ENCODE measurements at regions of chr5 and their contacts with region 1.

Region 1: DNA sequence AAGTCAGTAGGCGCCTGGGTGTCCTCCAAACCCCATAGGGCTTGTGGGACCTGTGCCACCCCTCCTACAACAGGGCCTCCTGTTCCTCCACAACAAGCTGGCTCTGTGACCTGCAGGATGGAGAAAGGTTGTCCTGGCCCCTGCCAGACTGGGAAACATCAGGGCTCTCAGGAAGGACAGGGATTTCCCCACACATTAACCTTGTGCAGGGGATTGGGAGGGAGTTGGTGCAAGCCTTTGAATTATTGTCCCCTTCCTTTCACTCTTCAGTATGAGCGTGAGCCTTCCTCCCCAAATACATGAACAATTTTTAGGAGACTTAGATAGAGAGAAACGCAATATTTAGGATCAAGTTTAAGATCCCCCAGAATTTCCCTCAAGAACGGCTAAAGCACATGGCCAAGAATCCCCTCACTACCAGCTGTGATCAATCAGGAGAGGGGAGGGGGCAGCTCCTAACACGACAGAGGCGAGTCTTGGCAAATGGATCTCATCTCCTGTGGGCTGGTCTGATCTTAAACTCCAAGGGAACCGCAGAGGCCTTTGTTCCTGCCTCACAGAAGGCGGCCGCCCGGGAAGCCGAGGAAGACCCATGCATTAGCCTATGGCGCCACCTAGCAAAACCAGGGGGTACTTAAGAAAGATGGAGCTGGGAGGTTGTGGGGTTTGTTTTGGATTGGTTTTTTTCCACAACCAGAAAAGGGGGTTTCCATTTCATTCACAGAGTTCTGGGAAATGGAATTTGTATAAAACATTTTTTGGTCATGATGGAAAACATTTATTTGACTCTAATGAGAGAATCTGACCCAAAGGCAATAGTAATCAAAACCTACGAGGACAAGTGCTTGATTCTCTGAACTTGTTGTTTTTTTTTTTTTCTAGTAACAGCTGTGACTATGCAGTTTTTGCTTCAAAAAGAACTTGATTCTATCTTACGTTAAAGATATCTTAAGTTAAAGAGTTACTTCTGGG is 36.1 kb upstream of the OSMR start:
- DNase-seq: peak; percentile 68
- H3K4me3 ChIP-seq: no peak overlapping the region
- H3K27ac ChIP-seq: peak overlapping the region in 3 of 4 donors; percentile 24 to 60 (median 41)
- H3K4me1 ChIP-seq: peaks cover 0 to 13% (median 0%) of the 10 kb centered on the region in 4 donors
- H3K27me3 ChIP-seq: no peaks in the 10 kb centered on the region
- CTCF ChIP-seq: peak; percentile 71 to 79 (median 76)
- EP300 ChIP-seq: no peak
- POLR2A ChIP-seq: no peak

Region 2: GRCh38 chr5:38433160-38433861 is 376.4 kb before region 1 on chr5:
- in situ Hi-C with region 1: loop called (anchors 10 to 25 kb)
- intact Hi-C with region 1: no loop called
- DNase-seq: no peak
- H3K4me3 ChIP-seq: no peak overlapping the region
- H3K27ac ChIP-seq: peak overlapping the region; percentile 24 to 56 (median 42)
- H3K4me1 ChIP-seq: peaks cover 0 to 12% (median 9%) of the 10 kb centered on the region in 4 donors
- H3K27me3 ChIP-seq: no peaks in the 10 kb centered on the region
- CTCF ChIP-seq: no peak
- EP300 ChIP-seq: no peak
- POLR2A ChIP-seq: no peak

Region 3: DNA sequence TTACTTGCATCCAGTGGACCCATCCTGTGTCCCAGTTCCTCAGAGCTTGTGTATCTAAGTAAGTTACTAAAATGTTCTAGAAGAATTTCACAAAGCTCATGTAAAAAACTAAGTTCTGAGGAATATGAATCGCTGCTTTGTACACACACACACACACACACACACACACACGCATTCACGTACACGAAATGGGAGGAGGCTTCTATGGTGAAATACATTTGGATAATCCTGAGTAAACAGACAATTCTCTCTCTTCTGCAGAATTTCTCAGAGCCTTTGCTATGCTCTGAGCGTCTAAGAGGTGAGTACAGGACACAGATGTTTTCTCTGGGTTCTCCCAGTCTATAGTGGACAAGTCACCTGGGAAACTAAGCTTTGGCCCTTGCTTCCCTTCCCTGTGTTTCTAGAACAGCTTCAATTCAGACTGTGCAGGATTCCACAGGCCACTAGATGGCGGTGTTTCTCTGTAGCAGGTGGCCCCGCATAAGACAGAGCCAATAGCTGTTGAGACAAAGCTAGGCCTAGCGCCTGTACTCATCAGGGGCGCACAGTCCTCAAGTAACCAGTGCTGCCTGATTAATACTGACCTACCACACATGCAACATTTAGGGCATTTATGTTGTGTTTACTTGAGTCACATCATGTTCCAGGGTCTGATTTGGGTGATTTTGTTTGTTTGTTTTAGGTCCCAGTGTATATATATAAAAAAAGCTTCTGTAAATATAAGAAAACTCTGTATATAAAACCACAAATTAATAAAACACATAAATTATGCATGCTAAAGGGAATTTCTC is 368.0 kb before region 1 on chr5:
- in situ Hi-C with region 1: loop called (anchors 10 to 25 kb)
- intact Hi-C with region 1: loop called (anchors 10 kb)
- DNase-seq: peak; percentile 85
- H3K4me3 ChIP-seq: no peak overlapping the region
- H3K27ac ChIP-seq: no peak overlapping the region
- H3K4me1 ChIP-seq: no peaks in the 10 kb centered on the region
- H3K27me3 ChIP-seq: no peaks in the 10 kb centered on the region
- CTCF ChIP-seq: peak; percentile 88 to 95 (median 90)
- EP300 ChIP-seq: no peak
- POLR2A ChIP-seq: no peak

Region 4: DNA sequence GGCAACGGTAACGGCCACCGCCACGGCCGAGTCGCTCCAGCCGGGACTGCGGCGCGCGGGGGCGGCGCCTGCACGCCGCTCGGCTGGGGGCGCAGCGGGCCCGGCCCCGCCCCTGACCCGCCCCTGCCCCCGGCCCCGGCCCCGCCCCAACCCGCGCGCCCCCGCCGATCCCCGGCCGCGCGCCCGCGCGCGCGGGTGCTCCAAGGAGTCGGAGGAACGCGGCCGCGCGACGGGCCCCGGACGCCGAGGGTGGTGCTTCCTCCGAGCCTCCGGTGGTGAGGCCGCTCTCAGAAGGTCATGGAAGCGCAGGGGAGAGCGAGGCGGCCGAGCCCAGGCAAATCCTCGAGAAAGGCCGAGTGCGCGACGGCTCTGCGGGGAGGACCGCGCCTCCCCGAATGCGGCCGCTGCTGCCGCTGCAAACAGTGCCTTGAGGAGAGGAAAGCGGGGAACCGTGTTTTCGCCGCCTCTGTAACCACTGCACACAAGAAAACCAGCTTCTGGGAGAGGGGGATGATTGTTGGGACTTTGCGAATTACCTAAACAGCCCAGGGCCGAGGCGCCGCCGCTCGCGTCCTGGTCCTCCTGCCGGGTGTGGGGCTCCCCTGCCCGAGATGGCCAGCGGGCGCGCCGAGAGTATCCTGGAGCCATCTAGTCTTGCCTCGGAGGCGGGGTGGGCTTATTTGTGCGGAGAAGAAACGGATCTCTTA is 252.9 kb before region 1 on chr5 and contains the start of gene LIFR:
- in situ Hi-C with region 1: loop called in 1 of 4 experiments (anchors 25 kb)
- intact Hi-C with region 1: no loop called
- DNase-seq: peak; percentile 51
- H3K4me3 ChIP-seq: peak within 1 kb of the TSS; percentile 63 to 77 (median 72)
- H3K27ac ChIP-seq: peak within 1 kb of the TSS; percentile 83 to 97 (median 92)
- H3K4me1 ChIP-seq: peaks cover 0 to 13% (median 0%) of the 10 kb centered on the region in 4 donors
- H3K27me3 ChIP-seq: peaks cover 58% of the 10 kb centered on the region
- CTCF ChIP-seq: no peak
- EP300 ChIP-seq: no peak
- POLR2A ChIP-seq: peak; percentile 56
- total RNA-seq, gene LIFR: 4.9 to 28.1 (median 12.8) TPM

Measured in transverse colon (tissue), 4 donors.